Mammary epithelial cell (primary cell): ENCODE measurements at regions of chr2 and their contacts with region 1.

Region 1: DNA sequence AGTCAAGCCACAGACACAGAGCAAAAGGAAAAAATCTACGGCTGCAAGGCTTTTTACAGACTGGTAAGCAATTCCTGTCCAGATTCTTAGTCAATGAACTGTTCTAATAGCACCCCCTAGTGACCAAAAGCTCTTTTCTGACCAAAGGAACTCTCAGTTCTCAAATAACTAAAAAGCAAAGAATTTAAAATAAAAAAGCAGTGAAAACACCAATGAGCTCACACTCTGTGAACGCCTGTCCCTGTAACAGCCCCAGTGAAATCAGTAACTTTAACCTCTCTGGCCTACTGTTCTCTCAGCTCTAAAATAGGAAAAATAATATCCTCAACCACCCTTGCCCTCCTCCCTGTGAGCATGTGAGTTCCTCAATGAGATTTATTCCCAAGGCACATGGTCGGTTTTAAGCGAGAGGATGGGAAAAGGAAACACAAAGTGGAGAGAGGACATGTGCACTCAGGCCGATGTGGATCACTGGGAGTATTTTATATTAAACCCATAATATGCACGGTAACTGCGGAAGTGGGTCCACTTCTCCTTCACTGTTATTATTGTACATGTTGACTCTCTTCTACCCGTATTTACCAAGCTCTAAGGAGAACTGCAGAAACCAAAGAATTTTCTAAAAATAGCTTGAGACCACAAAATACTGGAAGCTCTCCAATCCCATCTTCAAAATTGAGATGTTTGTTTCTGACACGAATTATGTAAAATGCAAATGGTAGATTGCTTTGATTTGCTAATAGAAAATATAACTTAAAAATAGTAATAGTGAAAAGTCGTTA is 128.5 kb downstream of the STK39 start:
- DNase-seq: peak; percentile 41
- H3K4me3 ChIP-seq: no peak overlapping the region
- H3K27ac ChIP-seq: no peak overlapping the region
- H3K4me1 ChIP-seq: no peaks in the 10 kb centered on the region
- H3K27me3 ChIP-seq: no peaks in the 10 kb centered on the region
- CTCF ChIP-seq: peak; percentile 40 to 69

Region 2: DNA sequence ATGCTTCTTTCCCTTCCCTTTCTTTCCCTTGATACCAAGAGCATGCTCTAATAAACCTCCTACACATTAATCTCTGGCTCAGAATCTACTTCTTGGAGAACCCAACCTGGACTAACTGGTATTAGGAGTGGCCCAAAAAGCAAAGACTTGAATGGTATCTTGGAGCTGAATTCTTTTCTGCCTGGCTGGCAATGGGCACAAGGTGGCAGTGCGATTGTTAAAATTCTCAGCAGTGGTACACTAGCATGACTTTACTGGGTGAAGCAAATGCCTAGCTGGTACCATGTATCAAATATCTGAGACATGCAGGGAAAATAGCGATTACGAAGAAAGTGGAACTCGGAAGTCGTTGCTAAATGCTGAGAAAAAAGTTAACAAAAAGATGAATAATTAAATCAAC is 854.5 kb before region 1 on chr2:
- CTCF ChIA-PET with region 1: no interaction called
- dilution Hi-C with region 1: no loop called
- in situ Hi-C with region 1: loop called in 1 of 2 experiments (anchors 25 kb)
- intact Hi-C with region 1: loop called (anchors 1 kb)
- DNase-seq: peak; percentile 6
- H3K4me3 ChIP-seq: no peak overlapping the region
- H3K27ac ChIP-seq: no peak overlapping the region
- H3K4me1 ChIP-seq: no peaks in the 10 kb centered on the region
- H3K27me3 ChIP-seq: no peaks in the 10 kb centered on the region
- CTCF ChIP-seq: peak; percentile 32 to 55

Region 3: GRCh38 chr2:167871286-167871685 is 247.6 kb before region 1 on chr2:
- CTCF ChIA-PET with region 1: no interaction called
- dilution Hi-C with region 1: no loop called
- in situ Hi-C with region 1: no loop called
- intact Hi-C with region 1: loop called (anchors 5 kb)
- DNase-seq: no peak
- H3K4me3 ChIP-seq: no peak overlapping the region
- H3K27ac ChIP-seq: no peak overlapping the region
- H3K4me1 ChIP-seq: no peaks in the 10 kb centered on the region
- H3K27me3 ChIP-seq: peaks cover 2% of the 10 kb centered on the region
- CTCF ChIP-seq: no peak

Region 4: DNA sequence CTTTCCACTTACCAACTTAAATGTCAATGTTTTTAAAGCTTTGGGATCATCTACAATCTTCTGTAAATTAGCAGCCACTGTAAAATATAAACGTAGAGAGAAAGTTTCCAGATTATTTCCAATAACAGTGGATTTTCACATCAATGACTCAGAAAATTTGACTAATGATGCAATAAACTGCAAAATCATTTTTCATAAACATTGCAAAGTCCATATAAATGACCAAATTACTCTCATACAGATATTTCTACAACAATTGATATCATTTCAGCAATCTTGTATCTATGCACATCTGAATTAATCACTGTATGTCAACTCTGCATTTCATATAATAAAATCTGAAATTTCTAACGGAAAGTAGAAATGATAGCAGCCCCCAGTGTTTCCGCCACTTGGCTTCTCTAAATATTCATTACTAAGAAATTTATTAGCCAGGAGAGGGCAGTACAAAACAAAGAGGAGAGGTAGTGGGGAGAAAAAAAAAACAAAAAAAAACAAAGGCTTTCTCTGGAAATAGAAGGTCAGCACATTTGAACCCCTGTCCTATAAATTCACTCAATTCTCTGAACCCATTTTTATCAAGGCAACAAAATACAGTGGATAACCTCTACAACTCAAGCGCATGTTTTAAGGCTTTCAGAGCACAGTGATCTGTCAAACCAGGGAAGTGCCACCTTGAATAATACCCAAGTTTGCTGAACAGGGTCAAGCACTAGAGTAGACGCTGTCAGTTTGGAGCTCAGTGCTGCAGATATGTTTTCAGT is 154.1 kb before region 1 on chr2:
- CTCF ChIA-PET with region 1: no interaction called
- dilution Hi-C with region 1: no loop called
- in situ Hi-C with region 1: loop called in 1 of 2 experiments (anchors 10 kb)
- intact Hi-C with region 1: loop called (anchors 1 kb)
- DNase-seq: no peak
- H3K4me3 ChIP-seq: no peak overlapping the region
- H3K27ac ChIP-seq: no peak overlapping the region
- H3K4me1 ChIP-seq: no peaks in the 10 kb centered on the region
- H3K27me3 ChIP-seq: no peaks in the 10 kb centered on the region
- CTCF ChIP-seq: peak in 1 of 2 donors; percentile 17

Region 5: GRCh38 chr2:168050377-168050776 is 68.5 kb before region 1 on chr2:
- CTCF ChIA-PET with region 1: no interaction called
- dilution Hi-C with region 1: no loop called
- in situ Hi-C with region 1: no loop called
- intact Hi-C with region 1: no loop called
- DNase-seq: no peak
- H3K4me3 ChIP-seq: no peak overlapping the region
- H3K27ac ChIP-seq: no peak overlapping the region
- H3K4me1 ChIP-seq: no peaks in the 10 kb centered on the region
- H3K27me3 ChIP-seq: no peaks in the 10 kb centered on the region
- CTCF ChIP-seq: no peak